ENCODE measurements at regions of chr10 and their contacts with region 1.

Region 1: DNA sequence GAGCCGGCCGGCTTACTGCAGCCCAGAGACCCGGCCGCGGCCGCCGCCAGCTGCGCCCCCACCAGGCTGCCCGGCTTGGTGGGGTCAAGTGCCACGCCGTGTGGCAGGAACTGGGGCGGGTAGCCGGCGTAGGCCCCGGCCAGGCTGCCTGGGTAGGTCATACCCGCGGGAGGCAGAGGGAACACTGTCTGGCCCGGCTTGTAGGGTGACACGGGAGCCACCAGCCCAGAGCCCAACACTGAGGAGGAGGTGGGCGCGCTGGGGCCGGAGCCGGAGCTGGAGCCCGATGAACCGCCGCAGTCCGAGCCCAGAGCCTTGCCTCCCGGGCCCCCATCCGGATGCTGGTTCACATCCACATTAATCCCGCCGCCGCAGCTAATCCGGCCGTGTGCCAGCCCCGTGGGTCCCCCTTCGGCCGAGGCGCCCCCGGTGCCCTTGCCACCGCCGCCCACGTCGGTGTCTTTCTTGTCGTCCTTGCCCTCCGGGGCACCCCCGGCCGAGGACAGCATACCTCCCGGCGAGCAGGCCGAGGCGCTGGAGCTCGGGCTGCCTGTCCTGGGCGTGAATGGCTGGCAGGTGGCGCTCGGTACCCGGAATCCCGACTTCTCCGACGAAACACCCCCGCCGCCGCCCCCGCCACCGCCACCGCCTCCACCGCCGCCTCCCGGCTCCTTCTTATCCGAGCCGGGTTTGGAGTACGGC is 2.0 kb downstream of the ZNF503 start:
- DNase-seq: peak; percentile 75
- CTCF ChIP-seq: peak; percentile 47

Region 2: GRCh38 chr10:75111367-75111906 is 288.2 kb before region 1 on chr10 and contains the start of gene SAMD8:
- in situ Hi-C with region 1: no loop called
- DNase-seq: peak; percentile 99
- CTCF ChIP-seq: no peak

Region 3: DNA sequence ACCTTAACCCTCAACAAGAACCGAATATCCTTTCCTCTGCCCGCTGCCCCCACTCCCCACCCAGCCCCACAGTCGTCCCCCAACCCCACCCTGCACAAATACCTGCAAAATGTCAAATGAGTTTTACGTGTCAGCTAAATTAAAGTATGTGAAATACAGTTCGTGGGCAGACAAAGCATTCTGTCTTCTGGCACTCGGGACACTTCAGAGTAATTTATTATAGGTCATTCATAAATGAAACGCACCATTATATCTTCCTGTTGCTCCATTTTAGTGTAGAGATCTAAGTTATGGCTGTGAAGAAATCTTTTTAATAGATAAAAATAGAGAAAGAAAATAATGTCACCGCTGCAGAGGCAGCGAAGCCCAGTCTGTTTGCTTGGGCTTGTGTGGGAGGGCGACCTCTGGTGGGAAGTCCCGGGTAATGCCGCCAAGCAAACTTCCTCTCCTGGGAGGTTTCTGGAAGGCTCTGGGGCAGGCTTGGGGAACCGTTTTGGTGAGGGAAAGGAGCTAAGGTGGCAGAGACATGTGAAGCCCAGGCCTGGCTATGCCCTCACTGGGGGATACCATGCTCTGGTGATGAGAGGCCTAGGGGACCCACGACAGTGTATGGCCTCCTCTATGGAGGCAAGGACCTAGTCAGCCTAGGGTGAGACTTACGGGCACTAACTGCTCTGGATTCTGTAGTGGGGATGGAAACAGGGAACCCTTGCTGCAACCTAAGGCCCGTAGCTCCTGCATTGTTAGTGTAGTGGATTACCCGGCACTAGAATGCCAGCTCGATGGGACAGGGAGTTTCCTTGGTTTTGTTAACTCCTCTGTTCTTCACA is 636.7 kb after region 1 on chr10:
- in situ Hi-C with region 1: loop called (anchors 25 kb)
- DNase-seq: peak; percentile 72
- CTCF ChIP-seq: peak; percentile 81

Measured in GM13976 (cell line).